A673 (cell line): ENCODE measurements at regions of chr12 and their contacts with region 1.

Region 1: DNA sequence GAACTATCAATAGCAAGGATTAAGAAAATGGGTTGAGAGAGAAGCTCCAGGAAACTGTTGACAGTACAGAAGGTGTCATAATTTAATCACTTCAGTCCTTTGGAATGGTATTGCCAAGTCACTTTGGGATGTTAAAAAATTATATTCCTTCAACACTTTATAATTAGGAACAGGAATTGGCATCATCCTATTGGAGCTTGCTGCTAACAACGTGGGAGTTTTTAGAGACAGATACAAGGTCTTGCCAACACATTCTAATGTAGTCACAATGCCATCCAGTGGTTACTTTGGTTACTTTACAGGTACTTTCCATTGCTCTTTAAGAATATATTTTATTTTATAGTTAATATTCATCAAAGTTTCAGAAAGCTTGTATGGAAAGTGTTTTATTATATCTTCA is 310.1 kb downstream of the SYT1 start:
- DNase-seq: peak; percentile 64
- H3K4me3 ChIP-seq: no peak overlapping the region
- H3K27ac ChIP-seq: no peak overlapping the region
- H3K4me1 ChIP-seq: peaks cover 24% of the 10 kb centered on the region
- H3K27me3 ChIP-seq: no peaks in the 10 kb centered on the region
- CTCF ChIP-seq: peak; percentile 52; the same call in 1 of the 2 replicates

Region 2: DNA sequence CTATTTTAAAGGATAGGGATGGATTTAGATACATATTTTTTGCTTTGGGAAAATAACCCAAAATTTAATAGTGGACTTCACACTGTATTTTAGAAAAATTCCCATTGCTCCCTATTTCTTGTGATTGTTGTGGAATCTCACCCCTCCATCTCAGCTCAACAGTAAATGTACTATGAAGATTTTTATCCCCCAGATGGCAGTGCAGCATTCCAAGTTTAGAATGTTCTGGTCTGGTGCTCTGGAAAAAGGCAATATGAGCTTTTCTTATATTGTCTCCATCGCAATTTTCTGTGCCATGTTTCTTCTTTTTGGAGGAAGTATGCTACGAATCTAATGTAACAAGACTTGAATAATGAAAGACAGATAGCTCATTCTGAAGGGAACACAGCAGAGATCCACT is 781.7 kb before region 1 on chr12:
- CTCF ChIA-PET with region 1: interaction called, 3 read pairs
- POLR2A ChIA-PET with region 1: no interaction called
- intact Hi-C with region 1: loop called (anchors 5 kb)
- DNase-seq: peak; percentile 77
- H3K4me3 ChIP-seq: no peak overlapping the region
- H3K27ac ChIP-seq: no peak overlapping the region
- H3K4me1 ChIP-seq: peaks cover 8% of the 10 kb centered on the region
- H3K27me3 ChIP-seq: no peaks in the 10 kb centered on the region
- CTCF ChIP-seq: peak; percentile 57

Region 3: GRCh38 chr12:78725951-78726580 is 448.6 kb before region 1 on chr12:
- CTCF ChIA-PET with region 1: no interaction called
- POLR2A ChIA-PET with region 1: no interaction called
- intact Hi-C with region 1: loop called (anchors 10 kb)
- DNase-seq: no peak
- H3K4me3 ChIP-seq: no peak overlapping the region
- H3K27ac ChIP-seq: no peak overlapping the region
- H3K4me1 ChIP-seq: peaks cover 39% of the 10 kb centered on the region
- H3K27me3 ChIP-seq: no peaks in the 10 kb centered on the region
- CTCF ChIP-seq: no peak